ENCODE measurements at regions of chr11 and their contacts with region 1.

Region 1: DNA sequence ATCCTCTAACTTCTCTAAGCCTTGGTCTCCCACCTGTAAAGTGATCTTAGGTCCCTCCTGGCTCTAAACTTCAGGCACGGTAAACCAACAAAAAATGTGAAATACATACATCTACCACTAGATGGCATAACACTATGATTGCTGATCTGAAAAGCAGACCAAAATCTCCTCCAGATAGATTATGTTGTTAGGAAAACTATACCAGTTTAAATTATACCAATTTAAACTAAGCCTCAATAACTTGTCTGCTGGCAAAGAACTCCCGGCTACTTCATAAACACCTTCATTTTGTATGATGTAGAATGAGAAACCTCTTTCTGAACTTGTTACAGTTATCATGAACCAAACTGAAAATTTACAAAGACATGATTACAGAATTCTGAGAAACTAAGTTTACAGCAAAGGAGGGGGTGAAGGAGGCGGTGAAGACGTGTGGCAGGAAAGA is 85.9 kb downstream of the SBF2 start:
- DNase-seq: no peak
- ATAC-seq: peak in 6 of 8 donors; percentile 42 to 63 (median 54)
- H3K4me3 ChIP-seq: no peak overlapping the region
- H3K27ac ChIP-seq: no peak overlapping the region
- H3K4me1 ChIP-seq: peaks cover 0 to 26% (median 14%) of the 10 kb centered on the region in 9 donors
- H3K27me3 ChIP-seq: no peaks in the 10 kb centered on the region
- CTCF ChIP-seq: peak; percentile 62 to 82 (median 74)

Region 2: GRCh38 chr11:9861860-9862725 is 346.1 kb before region 1 on chr11:
- intact Hi-C with region 1: loop called in 1 of 10 experiments (anchors 10 kb)
- DNase-seq: peak; percentile 13 to 39
- ATAC-seq: peak in 7 of 8 donors; percentile 77 to 90 (median 82)
- H3K4me3 ChIP-seq: no peak overlapping the region
- H3K27ac ChIP-seq: no peak overlapping the region
- H3K4me1 ChIP-seq: peaks cover 0 to 19% (median 13%) of the 10 kb centered on the region in 9 donors
- H3K27me3 ChIP-seq: no peaks in the 10 kb centered on the region
- CTCF ChIP-seq: peak; percentile 53 to 85 (median 74)

Region 3: GRCh38 chr11:10366568-10367370 is 158.6 kb after region 1 on chr11:
- intact Hi-C with region 1: loop called in 2 of 10 experiments (anchors 5 to 10 kb)
- DNase-seq: peak; percentile 68 to 90
- ATAC-seq: peak; percentile 87 to 98 (median 96)
- H3K4me3 ChIP-seq: no peak overlapping the region
- H3K27ac ChIP-seq: peak overlapping the region in 5 of 10 donors; percentile 3 to 56 (median 25)
- H3K4me1 ChIP-seq: peaks cover 0 to 11% (median 10%) of the 10 kb centered on the region in 9 donors
- H3K27me3 ChIP-seq: no peaks in the 10 kb centered on the region
- CTCF ChIP-seq: peak; percentile 63 to 93 (median 87)

Region 4: GRCh38 chr11:10742471-10743208 is 534.5 kb after region 1 on chr11:
- intact Hi-C with region 1: loop called in 1 of 10 experiments (anchors 5 kb)
- DNase-seq: no peak
- ATAC-seq: peak in 1 of 8 donors; percentile 49
- H3K4me3 ChIP-seq: no peak overlapping the region
- H3K27ac ChIP-seq: no peak overlapping the region
- H3K4me1 ChIP-seq: peaks cover 0 to 17% (median 0%) of the 10 kb centered on the region in 9 donors
- H3K27me3 ChIP-seq: no peaks in the 10 kb centered on the region
- CTCF ChIP-seq: no peak

Measured in heart right ventricle (tissue), 16 donors.